Dendritic cell treated with granulocyte-macrophage colony-stimulating factor and Interleukin-4, amounts not matched to agents 40 ng/mL and 50 ng/mL, for 4 days (primary cell): ENCODE measurements at regions of chr2 and their contacts with region 1.

Region 1: GRCh38 chr2:177239932-177240630 is 24.4 kb downstream of the NFE2L2 start:
- H3K4me3 Mint-ChIP-seq: peak overlapping the region; percentile 37
- H3K27ac Mint-ChIP-seq: peak overlapping the region; percentile 93
- H3K4me1 Mint-ChIP-seq: peaks cover 72% of the 10 kb centered on the region
- H3K27me3 Mint-ChIP-seq: no peaks in the 10 kb centered on the region

Region 2: GRCh38 chr2:177212106-177212890 is 27.8 kb before region 1 on chr2 and contains the start of gene HNRNPA3:
- intact Hi-C with region 1: loop called (anchors 1 kb)
- H3K4me3 Mint-ChIP-seq: peak within 1 kb of the TSS; percentile 85
- H3K27ac Mint-ChIP-seq: peak within 1 kb of the TSS; percentile 99
- H3K4me1 Mint-ChIP-seq: peaks cover 27% of the 10 kb centered on the region
- H3K27me3 Mint-ChIP-seq: no peaks in the 10 kb centered on the region

Region 3: GRCh38 chr2:177256695-177257094 is 16.6 kb after region 1 on chr2:
- intact Hi-C with region 1: no loop called
- H3K4me3 Mint-ChIP-seq: peak overlapping the region; percentile 20
- H3K27ac Mint-ChIP-seq: no peak overlapping the region
- H3K4me1 Mint-ChIP-seq: peaks cover 75% of the 10 kb centered on the region
- H3K27me3 Mint-ChIP-seq: no peaks in the 10 kb centered on the region